Ascending aorta (tissue), 2 donors: ENCODE measurements at regions of chr6 and their contacts with region 1.

Region 1: DNA sequence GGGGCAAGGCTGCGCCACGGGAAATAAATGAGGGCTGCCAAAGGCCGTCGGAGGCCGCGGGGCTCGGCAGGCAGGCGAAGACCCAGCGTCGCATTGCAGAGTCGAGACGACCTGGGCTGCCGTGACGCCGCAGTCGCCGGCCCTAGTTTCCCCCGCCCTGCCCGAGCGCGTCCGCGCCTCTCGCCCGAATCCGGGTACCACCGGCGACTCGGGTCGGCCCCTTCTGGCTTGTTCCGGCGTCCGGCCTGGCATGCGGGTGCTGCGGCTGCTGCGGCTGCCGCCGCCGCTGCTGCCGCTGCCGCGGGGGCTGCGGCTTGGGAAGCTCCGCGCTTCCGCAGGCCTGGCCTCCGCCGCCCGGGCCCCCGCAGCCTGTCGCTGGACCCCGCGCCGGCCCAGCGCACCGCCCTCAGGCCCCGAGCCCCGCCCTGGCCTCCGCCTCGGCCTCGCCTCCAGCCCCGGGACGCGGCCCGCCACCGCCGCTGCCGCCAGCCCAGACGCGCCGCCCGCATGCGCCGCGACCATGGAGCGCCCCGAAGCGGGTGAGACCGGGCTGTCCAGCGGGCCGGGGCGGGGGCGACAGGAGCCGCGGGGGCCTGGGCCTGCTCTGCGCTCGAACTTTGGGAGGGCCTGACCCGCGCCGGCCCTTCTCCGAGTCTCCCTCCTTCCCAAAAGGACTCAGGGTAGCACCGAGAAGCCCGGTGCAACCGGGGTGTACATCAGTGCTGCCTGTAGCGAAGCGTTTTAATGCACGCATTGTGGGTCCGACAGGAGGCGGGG is at the start of gene AKAP7:
- DNase-seq: peak in 1 of 2 donors; percentile 81
- H3K4me3 ChIP-seq: peak within 1 kb of the TSS; percentile 83 to 98
- H3K27ac ChIP-seq: peak within 1 kb of the TSS; percentile 87 to 94
- H3K4me1 ChIP-seq: no peaks in the 10 kb centered on the region
- H3K27me3 ChIP-seq: no peaks in the 10 kb centered on the region
- CTCF ChIP-seq: no peak
- total RNA-seq, gene AKAP7: 1.3 TPM

Region 2: DNA sequence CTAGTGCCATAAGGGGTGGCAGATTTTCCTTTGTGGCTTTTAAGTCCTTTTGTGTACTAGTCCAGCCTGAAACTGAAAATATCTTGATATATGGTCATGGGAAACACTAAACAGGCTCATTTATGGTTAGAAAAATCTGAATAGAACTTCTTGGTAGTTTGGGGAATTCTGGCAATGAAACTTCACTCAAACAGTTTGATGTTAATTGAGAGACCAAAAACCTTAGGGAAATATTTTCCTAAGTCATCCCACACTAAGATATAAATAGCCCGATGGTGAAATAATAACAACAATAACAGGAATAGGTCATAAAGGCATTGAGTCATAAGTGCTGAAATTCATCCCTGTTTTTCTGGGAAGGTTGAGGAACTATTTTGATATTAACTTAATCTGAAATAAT is 454.4 kb before region 1 on chr6:
- intact Hi-C with region 1: loop called (anchors 10 kb)
- DNase-seq: no peak
- H3K4me3 ChIP-seq: peak overlapping the region in 1 of 2 donors; percentile 2
- H3K27ac ChIP-seq: peak overlapping the region; percentile 64 to 73
- H3K4me1 ChIP-seq: peaks cover 0 to 14% of the 10 kb centered on the region in 2 donors
- H3K27me3 ChIP-seq: no peaks in the 10 kb centered on the region
- CTCF ChIP-seq: no peak